GM23248 (cell line): ENCODE measurements at regions of chr12 and their contacts with region 1.

Region 1: GRCh38 chr12:104215638-104216297 is at the start of gene TXNRD1:
- DNase-seq: peak; percentile 92
- H3K4me3 ChIP-seq: peak within 1 kb of the TSS; percentile 53
- H3K27ac ChIP-seq: no peak within 1 kb of the TSS
- H3K4me1 ChIP-seq: peaks cover 31% of the 10 kb centered on the region
- H3K27me3 ChIP-seq: no peaks in the 10 kb centered on the region
- total RNA-seq, gene TXNRD1: 464 and 477 TPM in 2 replicates

Region 2: DNA sequence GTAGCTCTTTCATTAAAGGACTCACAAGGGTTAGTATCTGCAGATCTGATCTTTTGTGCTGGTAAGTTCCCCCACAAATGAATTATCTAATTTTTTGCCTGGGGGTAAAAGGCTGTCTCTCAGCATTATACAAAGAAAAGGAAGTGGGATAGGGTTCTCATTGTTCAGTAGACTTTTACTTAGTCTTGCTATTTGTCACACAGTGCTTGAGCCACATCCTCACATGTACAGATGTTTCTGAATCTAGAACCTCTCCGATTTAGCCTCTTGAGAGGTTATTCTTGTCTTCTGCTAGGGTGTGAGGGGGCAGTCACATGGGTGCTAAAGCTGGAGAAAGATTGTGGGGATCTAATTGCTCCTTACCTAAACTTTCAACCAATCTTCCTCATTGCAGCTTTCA is 649.3 kb after region 1 on chr12:
- in situ Hi-C with region 1: loop called (anchors 25 kb)
- DNase-seq: no peak
- H3K4me3 ChIP-seq: no peak overlapping the region
- H3K27ac ChIP-seq: no peak overlapping the region
- H3K4me1 ChIP-seq: peaks cover 19% of the 10 kb centered on the region
- H3K27me3 ChIP-seq: no peaks in the 10 kb centered on the region